ENCODE measurements at regions of chr1 and their contacts with region 1.

Region 1: DNA sequence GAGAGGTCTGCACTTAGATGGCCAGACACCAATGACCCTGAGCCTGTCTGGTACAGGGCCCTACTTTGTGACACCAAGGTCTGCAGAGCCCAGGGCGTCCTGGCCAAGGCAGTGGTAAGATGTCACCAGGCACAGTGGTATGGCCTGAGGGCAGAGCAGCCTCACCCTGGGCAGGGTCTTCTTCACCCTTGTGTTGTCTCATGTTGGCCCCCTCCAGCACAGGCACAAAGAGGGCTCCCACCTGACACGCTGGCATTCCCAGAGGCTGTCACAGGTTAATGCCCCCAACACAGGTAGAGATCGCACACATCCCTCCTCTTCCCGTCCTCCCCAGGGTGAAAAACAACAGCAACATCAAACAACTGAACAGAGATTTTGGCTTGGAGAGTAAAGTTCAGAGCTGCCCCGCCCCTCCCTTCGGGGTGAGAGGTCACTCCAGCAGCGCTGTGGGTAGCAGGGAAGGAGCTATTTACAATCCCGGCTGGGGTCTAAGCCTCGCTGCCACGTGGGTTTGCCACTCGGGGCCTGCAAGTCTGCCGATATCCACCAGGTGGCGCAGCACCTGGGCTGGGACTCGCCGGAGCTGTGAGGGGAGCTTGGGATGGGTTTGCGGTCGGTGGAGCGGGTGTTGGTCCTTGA is 12.6 kb downstream of the EFNA3 start:
- DNase-seq: peak; percentile 79 to 84
- ATAC-seq: peak; percentile 37 to 74 (median 62)
- H3K4me3 ChIP-seq: no peak overlapping the region
- H3K27ac ChIP-seq: no peak overlapping the region
- H3K4me1 ChIP-seq: peaks cover 0 to 33% (median 22%) of the 10 kb centered on the region in 9 donors
- H3K27me3 ChIP-seq: no peaks in the 10 kb centered on the region
- CTCF ChIP-seq: peak; percentile 94 to 99 (median 99)

Region 2: DNA sequence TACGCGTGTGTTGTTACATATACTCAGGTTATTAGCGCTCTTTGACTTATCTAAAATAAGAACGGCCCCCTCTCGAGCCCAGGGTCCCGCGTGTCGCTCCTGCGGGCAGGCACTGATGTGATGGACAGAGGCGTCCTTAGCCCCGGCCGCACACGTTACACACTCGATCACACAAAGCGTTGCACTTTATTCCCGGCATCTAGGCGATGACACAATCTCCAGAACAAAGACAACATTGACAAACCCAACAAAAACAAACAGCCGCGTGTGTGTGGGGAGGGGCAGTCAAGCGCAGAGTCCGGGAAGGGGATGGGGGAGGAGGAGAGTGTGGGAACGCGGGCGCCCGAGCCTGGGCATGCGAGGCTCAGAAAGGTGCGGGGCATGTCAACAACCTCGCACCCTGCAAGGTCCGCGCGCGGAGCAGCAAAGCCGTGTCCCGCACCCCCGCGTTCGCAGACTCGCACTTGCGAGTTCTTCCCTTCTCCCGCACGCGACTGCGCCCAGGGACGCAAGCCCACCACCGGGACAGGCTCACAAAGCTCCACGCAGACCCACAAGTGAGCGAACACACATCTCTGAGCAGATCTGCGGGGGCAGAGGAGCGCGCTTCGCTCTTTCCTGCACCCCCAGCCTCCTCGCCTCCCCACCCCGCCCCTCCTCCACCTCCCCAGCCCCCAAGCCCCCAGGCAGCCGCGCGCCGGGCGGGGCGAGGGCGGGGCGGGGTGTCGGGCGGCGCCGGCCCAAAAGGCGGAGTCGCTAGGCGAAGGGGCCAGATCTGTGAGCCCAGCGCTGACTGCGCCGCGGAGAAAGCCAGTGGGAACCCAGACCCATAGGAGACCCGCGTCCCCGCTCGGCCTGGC is 36.1 kb after region 1 on chr1 and contains the start of gene EFNA1:
- intact Hi-C with region 1: loop called in 9 of 10 experiments (anchors 2 to 5 kb)
- DNase-seq: peak; percentile 75 to 81
- ATAC-seq: peak; percentile 60 to 73 (median 70)
- H3K4me3 ChIP-seq: peak within 1 kb of the TSS; percentile 47 to 93 (median 79)
- H3K27ac ChIP-seq: peak within 1 kb of the TSS; percentile 81 to 99 (median 94)
- H3K4me1 ChIP-seq: peaks cover 17 to 73% (median 59%) of the 10 kb centered on the region in 9 donors
- H3K27me3 ChIP-seq: peaks cover 0 to 55% (median 0%) of the 10 kb centered on the region in 7 donors
- CTCF ChIP-seq: peak in 1 of 9 donors; percentile 1
- total RNA-seq, gene EFNA1: 28.9 to 50.0 (median 35.6) TPM

Region 3: DNA sequence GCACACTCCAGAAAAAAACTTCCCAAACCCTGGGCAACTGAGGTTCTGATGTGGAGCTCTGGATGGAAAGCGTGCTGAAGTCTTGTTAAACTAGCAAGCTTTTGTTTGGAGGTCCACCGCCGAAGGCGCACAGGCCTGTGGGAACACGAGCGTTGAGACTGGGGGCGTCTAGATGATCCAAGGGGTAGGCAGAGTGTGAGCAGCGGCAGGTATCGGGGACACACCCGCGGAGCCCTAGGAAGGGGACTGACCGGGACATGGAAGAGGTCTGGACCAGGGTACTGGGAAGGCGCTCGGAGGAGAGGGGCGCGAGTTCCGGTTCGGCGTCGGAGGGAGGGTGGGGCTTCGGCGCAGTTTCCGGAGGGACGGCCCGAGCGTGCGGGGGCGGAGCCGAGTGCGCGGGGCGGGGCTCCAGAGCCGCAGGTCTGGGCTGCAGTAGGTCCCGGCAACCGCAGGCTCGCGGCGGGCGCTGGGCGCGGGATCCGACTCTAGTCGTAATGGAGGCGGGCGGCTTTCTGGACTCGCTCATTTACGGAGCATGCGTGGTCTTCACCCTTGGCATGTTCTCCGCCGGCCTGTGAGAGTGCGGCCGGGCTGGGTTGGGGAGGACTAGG is 44.3 kb after region 1 on chr1 and contains the start of gene SLC50A1:
- intact Hi-C with region 1: loop called in 2 of 10 experiments (anchors 5 kb)
- DNase-seq: peak; percentile 94 to 95
- ATAC-seq: peak; percentile 89 to 95 (median 94)
- H3K4me3 ChIP-seq: peak within 1 kb of the TSS; percentile 29 to 76 (median 66)
- H3K27ac ChIP-seq: peak within 1 kb of the TSS; percentile 82 to 100 (median 98)
- H3K4me1 ChIP-seq: peaks cover 14 to 90% (median 76%) of the 10 kb centered on the region in 9 donors
- H3K27me3 ChIP-seq: no peaks in the 10 kb centered on the region
- CTCF ChIP-seq: peak in 7 of 9 donors; percentile 20 to 64 (median 41)
- total RNA-seq, gene SLC50A1: 5.5 to 16.8 (median 7.9) TPM

Region 4: GRCh38 chr1:155167166-155168104 is 76.2 kb after region 1 on chr1:
- intact Hi-C with region 1: loop called (anchors 1 to 2 kb)
- DNase-seq: peak; percentile 90 to 93
- ATAC-seq: peak; percentile 65 to 87 (median 78)
- H3K4me3 ChIP-seq: peak overlapping the region in 6 of 10 donors; percentile 2 to 37 (median 28)
- H3K27ac ChIP-seq: peak overlapping the region; percentile 63 to 90 (median 82)
- H3K4me1 ChIP-seq: peaks cover 11 to 44% (median 34%) of the 10 kb centered on the region in 9 donors
- H3K27me3 ChIP-seq: peaks cover 0 to 15% (median 0%) of the 10 kb centered on the region in 7 donors
- CTCF ChIP-seq: peak; percentile 83 to 97 (median 89)

Region 5: DNA sequence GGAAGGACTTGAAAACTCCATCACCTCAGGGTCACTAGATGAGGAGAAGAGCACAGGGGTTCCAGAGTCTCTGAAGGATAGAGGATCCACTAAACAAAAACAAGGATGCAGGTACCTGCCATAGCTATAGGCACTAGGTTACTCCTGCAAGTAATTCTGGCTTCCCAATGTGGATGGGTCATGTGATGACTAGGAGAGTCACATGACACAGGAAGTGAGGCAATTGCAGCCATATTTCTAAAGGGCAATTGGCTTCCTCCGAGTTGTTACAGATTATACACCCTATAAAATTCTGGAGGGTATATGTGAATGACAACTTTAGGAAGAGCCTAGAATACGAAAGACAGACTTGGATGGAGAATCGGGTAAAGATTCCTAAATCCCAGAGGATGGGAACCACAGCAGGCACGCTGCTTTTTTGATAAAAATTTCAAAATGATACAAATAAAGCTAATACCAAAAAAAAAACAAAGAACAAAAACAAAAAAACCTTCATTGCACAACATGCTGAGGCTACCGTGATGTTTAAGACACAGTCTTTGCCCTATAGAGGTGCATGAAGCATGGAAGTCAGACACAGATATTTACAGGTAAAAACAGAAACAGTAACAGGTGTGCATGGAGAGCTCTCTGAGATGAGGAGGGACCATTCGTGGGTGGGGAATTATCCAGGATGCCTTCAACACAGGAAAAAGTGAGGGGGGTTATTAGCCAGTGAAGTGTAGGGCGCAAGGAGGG is 127.8 kb after region 1 on chr1:
- intact Hi-C with region 1: no loop called
- DNase-seq: peak in 1 of 2 donors; percentile 65
- ATAC-seq: peak in 7 of 8 donors; percentile 25 to 71 (median 66)
- H3K4me3 ChIP-seq: peak overlapping the region in 3 of 10 donors; percentile 21 to 36 (median 30)
- H3K27ac ChIP-seq: peak overlapping the region in 1 of 10 donors; percentile 48
- H3K4me1 ChIP-seq: peaks cover 0 to 55% (median 3%) of the 10 kb centered on the region in 9 donors
- H3K27me3 ChIP-seq: no peaks in the 10 kb centered on the region
- CTCF ChIP-seq: no peak

Measured in heart right ventricle (tissue), 16 donors.